GM12878 (cell line): ENCODE measurements at regions of chr7 and their contacts with region 1.

Region 1: GRCh38 chr7:121994625-121995410 is 121.9 kb downstream of the PTPRZ1 start:
- DNase-seq: no peak
- ATAC-seq: peak; percentile 98
- H3K4me3 ChIP-seq: no peak overlapping the region
- H3K27ac ChIP-seq: no peak overlapping the region
- H3K4me1 ChIP-seq: no peaks in the 10 kb centered on the region
- H3K27me3 ChIP-seq: no peaks in the 10 kb centered on the region
- CTCF ChIP-seq: peak; percentile 69 to 84 (median 73)
- EP300 ChIP-seq: no peak
- POLR2A ChIP-seq: no peak
- RAD21 ChIP-seq: peak; percentile 88

Region 2: GRCh38 chr7:120987683-120988590 is 1006.9 kb before region 1 on chr7:
- CTCF ChIA-PET with region 1: interaction called, 6 read pairs
- POLR2A ChIA-PET with region 1: no interaction called
- RAD21 ChIA-PET with region 1: interaction called, 7 read pairs
- SMC1A ChIA-PET with region 1: interaction called, 18 read pairs
- in situ Hi-C with region 1: no loop called
- intact Hi-C with region 1: loop called (anchors 10 kb)
- DNase-seq: peak; percentile 47
- ATAC-seq: peak; percentile 97
- H3K4me3 ChIP-seq: peak overlapping the region; percentile 45; the same call in 1 of the 2 replicates
- H3K27ac ChIP-seq: no peak overlapping the region
- H3K4me1 ChIP-seq: peaks cover 21% of the 10 kb centered on the region
- H3K27me3 ChIP-seq: peaks cover 0 to 15% of the 10 kb centered on the region in 2 experiments
- CTCF ChIP-seq: peak; percentile 89 to 98 (median 95)
- EP300 ChIP-seq: no peak
- POLR2A ChIP-seq: no peak
- RAD21 ChIP-seq: peak; percentile 90

Region 3: DNA sequence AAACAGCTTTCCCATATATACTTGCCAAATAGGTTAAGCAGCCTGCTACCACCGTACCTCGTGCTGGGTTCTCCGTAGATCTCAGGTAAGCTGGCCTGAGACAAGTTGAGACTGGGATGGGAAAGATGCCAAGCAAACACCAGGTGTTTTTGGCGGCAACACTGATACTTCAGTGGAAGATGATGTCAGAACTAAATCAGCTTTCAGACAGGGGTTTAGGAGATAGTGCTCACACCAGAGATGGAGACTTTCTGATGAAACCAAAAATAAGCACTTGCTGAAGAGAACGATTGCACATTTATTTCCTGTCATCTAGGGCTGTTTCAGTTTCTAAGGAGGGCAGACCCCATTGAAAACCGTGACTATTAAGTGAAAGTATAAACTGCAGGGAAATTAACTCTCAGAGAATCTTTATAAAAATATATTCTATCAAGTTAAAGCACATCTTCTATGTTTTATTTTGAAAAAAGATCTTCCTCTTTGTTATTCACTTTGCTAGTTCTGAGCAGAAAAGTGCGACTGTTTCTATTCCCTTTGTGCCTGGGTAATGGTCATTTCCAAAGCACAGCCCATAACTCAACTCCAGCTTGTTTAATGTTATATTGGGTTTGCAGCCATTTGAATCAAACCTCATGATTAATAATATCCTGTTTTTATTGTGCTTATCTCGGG is 856.4 kb before region 1 on chr7:
- CTCF ChIA-PET with region 1: interaction called, 5 read pairs
- POLR2A ChIA-PET with region 1: no interaction called
- RAD21 ChIA-PET with region 1: interaction called, 5 read pairs
- SMC1A ChIA-PET with region 1: interaction called, 5 read pairs
- in situ Hi-C with region 1: loop called (anchors 25 kb)
- intact Hi-C with region 1: no loop called
- DNase-seq: peak; percentile 54
- ATAC-seq: peak; percentile 99
- H3K4me3 ChIP-seq: peak overlapping the region; percentile 50; the same call in 1 of the 2 replicates
- H3K27ac ChIP-seq: no peak overlapping the region
- H3K4me1 ChIP-seq: no peaks in the 10 kb centered on the region
- H3K27me3 ChIP-seq: no peaks in the 10 kb centered on the region
- CTCF ChIP-seq: no peak
- EP300 ChIP-seq: no peak
- POLR2A ChIP-seq: no peak
- RAD21 ChIP-seq: no peak

Region 4: GRCh38 chr7:121605317-121605680 is 389.5 kb before region 1 on chr7:
- CTCF ChIA-PET with region 1: interaction called, 24 read pairs
- POLR2A ChIA-PET with region 1: no interaction called
- RAD21 ChIA-PET with region 1: interaction called, 6 read pairs
- SMC1A ChIA-PET with region 1: interaction called, 5 read pairs
- in situ Hi-C with region 1: no loop called
- intact Hi-C with region 1: no loop called
- DNase-seq: no peak
- ATAC-seq: peak; percentile 57
- H3K4me3 ChIP-seq: no peak overlapping the region
- H3K27ac ChIP-seq: no peak overlapping the region
- H3K4me1 ChIP-seq: no peaks in the 10 kb centered on the region
- H3K27me3 ChIP-seq: no peaks in the 10 kb centered on the region
- CTCF ChIP-seq: peak in 1 of 3 experiments; percentile 24; a peak in 1 of 6 replicates
- EP300 ChIP-seq: no peak
- POLR2A ChIP-seq: no peak
- RAD21 ChIP-seq: no peak

Region 5: GRCh38 chr7:121752706-121753105 is 242.1 kb before region 1 on chr7:
- CTCF ChIA-PET with region 1: interaction called, 26 read pairs
- POLR2A ChIA-PET with region 1: no interaction called
- RAD21 ChIA-PET with region 1: interaction called, 8 read pairs
- SMC1A ChIA-PET with region 1: interaction called, 26 read pairs
- in situ Hi-C with region 1: loop called (anchors 5 kb)
- intact Hi-C with region 1: loop called (anchors 1 kb)
- DNase-seq: no peak
- ATAC-seq: 0 out of 3 replicates have a peak, but pooled peaks have one; percentile 42
- H3K4me3 ChIP-seq: no peak overlapping the region
- H3K27ac ChIP-seq: no peak overlapping the region
- H3K4me1 ChIP-seq: no peaks in the 10 kb centered on the region
- H3K27me3 ChIP-seq: no peaks in the 10 kb centered on the region
- CTCF ChIP-seq: peak; percentile 26 to 32 (median 31); a peak in 5 of 6 replicates
- EP300 ChIP-seq: no peak
- POLR2A ChIP-seq: no peak
- RAD21 ChIP-seq: peak; percentile 39

Region 6: GRCh38 chr7:121954803-121955202 is 40.0 kb before region 1 on chr7:
- CTCF ChIA-PET with region 1: interaction called, 21 read pairs
- POLR2A ChIA-PET with region 1: no interaction called
- RAD21 ChIA-PET with region 1: no interaction called
- SMC1A ChIA-PET with region 1: no interaction called
- in situ Hi-C with region 1: no loop called
- intact Hi-C with region 1: no loop called
- DNase-seq: no peak
- ATAC-seq: peak; percentile 31; the same call in 2 of the 3 replicates
- H3K4me3 ChIP-seq: no peak overlapping the region
- H3K27ac ChIP-seq: no peak overlapping the region
- H3K4me1 ChIP-seq: no peaks in the 10 kb centered on the region
- H3K27me3 ChIP-seq: no peaks in the 10 kb centered on the region
- CTCF ChIP-seq: no peak
- EP300 ChIP-seq: no peak
- POLR2A ChIP-seq: no peak
- RAD21 ChIP-seq: no peak

Region 7: GRCh38 chr7:122006687-122007086 is 11.9 kb after region 1 on chr7:
- CTCF ChIA-PET with region 1: interaction called, 25 read pairs
- POLR2A ChIA-PET with region 1: no interaction called
- RAD21 ChIA-PET with region 1: interaction called, 5 read pairs
- SMC1A ChIA-PET with region 1: interaction called, 10 read pairs
- in situ Hi-C with region 1: no loop called
- intact Hi-C with region 1: no loop called
- DNase-seq: no peak
- ATAC-seq: no peak
- H3K4me3 ChIP-seq: no peak overlapping the region
- H3K27ac ChIP-seq: no peak overlapping the region
- H3K4me1 ChIP-seq: no peaks in the 10 kb centered on the region
- H3K27me3 ChIP-seq: no peaks in the 10 kb centered on the region
- CTCF ChIP-seq: no peak
- EP300 ChIP-seq: no peak
- POLR2A ChIP-seq: no peak
- RAD21 ChIP-seq: no peak